ENCODE measurements at regions of chr19 and their contacts with region 1.

Region 1: DNA sequence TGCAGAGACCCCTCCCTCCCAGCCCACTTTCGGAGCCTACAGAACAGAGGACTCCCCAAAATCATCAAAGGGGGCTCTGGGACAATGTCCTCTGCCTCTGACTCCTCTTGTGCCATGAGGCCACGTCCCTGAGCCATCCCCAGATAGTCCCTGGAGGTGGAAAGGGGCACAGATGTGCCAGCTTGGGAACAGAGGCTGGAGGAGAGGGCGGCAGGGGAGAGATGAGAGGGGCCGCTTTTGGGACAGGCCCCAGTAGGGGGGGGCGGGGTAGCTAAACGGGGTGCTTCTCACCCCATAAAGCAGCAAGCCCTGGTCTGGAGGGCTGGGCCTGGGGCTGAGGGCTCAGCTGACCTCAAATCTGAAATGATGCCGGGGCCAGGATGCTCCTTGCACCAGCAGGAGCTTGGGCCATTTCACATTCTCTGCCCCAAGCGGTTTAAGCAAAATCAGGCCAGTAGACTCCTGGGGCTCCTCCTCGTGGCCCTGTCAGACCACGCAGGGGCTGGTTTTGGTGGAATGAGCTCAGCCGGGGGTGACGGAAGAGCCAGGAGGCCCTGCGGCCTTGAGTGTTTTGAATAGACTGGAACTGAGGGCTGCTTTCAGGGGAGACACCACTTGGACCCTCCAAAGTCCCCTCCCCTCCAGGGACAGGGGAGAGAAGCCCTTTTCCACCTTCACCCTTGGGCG is 27.1 kb downstream of the ONECUT3 start:
- DNase-seq: no peak
- CTCF ChIP-seq: no peak

Region 2: DNA sequence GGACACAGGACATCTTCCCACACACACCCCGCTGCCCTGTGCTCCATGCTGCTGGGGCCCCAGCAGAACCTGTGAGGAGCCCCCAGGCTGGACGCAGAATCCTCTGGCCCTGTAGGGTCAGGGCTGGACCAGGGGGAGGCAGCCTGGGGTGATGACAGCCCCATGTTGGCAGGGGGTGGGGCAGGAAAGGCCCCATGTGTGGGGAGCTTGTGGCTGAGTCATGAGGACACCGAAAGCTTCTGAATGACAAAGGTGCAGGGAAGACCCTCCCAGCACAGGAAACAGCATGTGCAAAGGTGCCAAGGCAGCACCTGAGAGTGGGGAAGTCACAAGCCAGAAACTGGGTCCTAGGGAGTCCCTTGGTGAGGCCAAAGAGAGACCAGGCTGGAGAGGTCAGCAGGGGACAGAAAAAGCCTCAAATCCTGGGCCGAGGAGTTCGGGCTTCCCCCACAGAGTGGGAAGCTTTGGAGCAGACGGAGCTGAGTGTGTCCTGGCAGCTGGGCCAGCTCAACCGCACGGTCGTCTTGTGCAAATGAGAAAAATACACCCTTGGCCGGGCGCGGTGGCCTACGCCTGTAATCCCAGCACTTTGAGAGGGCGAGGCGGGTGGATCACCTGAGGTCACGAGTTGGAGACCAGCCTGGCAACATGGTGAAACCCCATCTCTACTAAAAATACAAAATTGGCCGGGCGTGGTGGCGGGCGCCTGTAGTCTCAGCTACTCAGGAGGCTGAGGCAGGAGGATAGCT is 14.2 kb after region 1 on chr19:
- CTCF ChIA-PET with region 1: interaction called, 15 read pairs
- POLR2A ChIA-PET with region 1: no interaction called
- DNase-seq: no peak
- CTCF ChIP-seq: no peak

Region 3: GRCh38 chr19:1848399-1849131 is 68.2 kb after region 1 on chr19 and contains the start of gene REXO1:
- CTCF ChIA-PET with region 1: no interaction called
- POLR2A ChIA-PET with region 1: no interaction called
- DNase-seq: peak; percentile 93
- CTCF ChIP-seq: peak; percentile 87

Region 4: GRCh38 chr19:2517868-2518625 is 737.6 kb after region 1 on chr19:
- CTCF ChIA-PET with region 1: no interaction called
- POLR2A ChIA-PET with region 1: no interaction called
- DNase-seq: no peak
- CTCF ChIP-seq: no peak